Left ventricle myocardium inferior (tissue), 1 donor: ENCODE measurements at regions of chr1 and their contacts with region 1.

Region 1: DNA sequence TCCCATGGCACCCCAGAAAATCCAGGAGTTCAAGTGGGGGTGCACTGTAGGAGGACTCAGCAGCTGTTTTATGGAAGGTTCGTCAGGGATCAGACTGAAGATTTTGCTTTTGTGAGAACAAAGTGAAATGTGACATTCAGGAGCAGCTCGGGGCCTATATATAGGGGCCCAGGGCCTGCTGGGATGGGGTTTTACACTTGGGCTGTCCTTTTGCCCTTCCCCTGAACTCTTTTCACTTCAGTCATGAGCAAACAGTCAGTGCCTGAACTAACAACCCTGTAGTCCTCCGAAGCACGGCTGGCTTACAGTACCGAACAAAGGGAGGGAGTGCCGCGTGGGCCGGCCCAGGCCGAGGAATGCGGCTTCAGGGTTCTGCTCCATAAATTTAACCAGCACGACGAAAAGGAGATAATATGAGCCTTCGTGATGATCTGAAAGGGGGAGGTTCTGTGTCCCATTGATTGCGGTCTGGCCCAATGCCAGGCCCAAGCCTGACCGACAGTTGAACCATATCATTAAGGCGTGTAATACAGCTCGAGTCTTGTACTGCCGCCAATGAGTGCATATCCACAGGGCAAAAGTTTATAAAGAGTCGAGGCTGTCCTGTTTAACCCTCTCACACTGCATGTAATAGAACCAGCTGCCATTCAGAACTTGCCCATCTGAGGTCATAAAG is 139.9 kb downstream of the DHRS3 start:
- DNase-seq: peak; percentile 76
- H3K4me3 ChIP-seq: no peak overlapping the region
- H3K27ac ChIP-seq: peak overlapping the region; percentile 89
- H3K4me1 ChIP-seq: peaks cover 98% of the 10 kb centered on the region
- H3K27me3 ChIP-seq: no peaks in the 10 kb centered on the region
- CTCF ChIP-seq: no peak

Region 2: GRCh38 chr1:12407050-12407961 is 70.8 kb before region 1 on chr1:
- intact Hi-C with region 1: loop called (anchors 2 kb)
- DNase-seq: no peak
- H3K4me3 ChIP-seq: no peak overlapping the region
- H3K27ac ChIP-seq: peak overlapping the region; percentile 78
- H3K4me1 ChIP-seq: peaks cover 53% of the 10 kb centered on the region
- H3K27me3 ChIP-seq: no peaks in the 10 kb centered on the region
- CTCF ChIP-seq: peak; percentile 66